ENCODE measurements at regions of chr10 and their contacts with region 1.

Region 1: DNA sequence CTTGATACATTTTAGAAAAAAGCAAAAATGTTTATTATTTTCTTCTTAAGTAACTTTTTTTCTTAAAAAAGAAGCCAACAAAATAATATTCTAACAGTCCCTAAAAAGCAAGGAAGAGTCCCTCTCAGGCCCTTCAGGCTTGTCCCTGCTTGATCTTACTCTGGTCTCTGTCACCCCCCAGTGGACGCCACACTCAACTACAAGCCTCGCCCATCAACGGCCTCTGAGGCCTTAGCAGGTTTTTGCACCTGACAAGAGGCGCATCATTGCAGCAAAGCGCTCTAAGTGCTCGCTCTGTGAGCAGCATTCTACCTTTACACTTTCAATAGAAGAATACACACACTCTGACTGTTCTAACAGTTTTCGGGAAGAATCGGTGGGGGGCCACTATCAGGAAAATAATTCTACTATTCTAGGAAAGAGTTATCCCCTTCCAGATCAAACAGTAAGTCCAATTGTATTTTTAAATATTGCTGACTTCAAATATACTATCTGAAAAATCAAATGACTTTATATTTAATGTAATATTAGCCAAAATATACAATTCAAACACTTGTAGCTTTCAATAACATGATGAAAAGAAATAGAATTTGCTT is 139.2 kb downstream of the USP6NL start:
- DNase-seq: peak; percentile 85
- H3K4me3 Mint-ChIP-seq: no peak overlapping the region
- H3K27ac Mint-ChIP-seq: no peak overlapping the region
- H3K4me1 Mint-ChIP-seq: no peaks in the 10 kb centered on the region
- H3K27me3 Mint-ChIP-seq: no peaks in the 10 kb centered on the region

Region 2: GRCh38 chr10:11036407-11037011 is 435.7 kb before region 1 on chr10:
- CTCF ChIA-PET with region 1: no interaction called
- intact Hi-C with region 1: loop called (anchors 5 kb)
- DNase-seq: no peak
- H3K4me3 Mint-ChIP-seq: no peak overlapping the region
- H3K27ac Mint-ChIP-seq: no peak overlapping the region
- H3K4me1 Mint-ChIP-seq: peaks cover 4% of the 10 kb centered on the region
- H3K27me3 Mint-ChIP-seq: peaks cover 9% of the 10 kb centered on the region

Region 3: DNA sequence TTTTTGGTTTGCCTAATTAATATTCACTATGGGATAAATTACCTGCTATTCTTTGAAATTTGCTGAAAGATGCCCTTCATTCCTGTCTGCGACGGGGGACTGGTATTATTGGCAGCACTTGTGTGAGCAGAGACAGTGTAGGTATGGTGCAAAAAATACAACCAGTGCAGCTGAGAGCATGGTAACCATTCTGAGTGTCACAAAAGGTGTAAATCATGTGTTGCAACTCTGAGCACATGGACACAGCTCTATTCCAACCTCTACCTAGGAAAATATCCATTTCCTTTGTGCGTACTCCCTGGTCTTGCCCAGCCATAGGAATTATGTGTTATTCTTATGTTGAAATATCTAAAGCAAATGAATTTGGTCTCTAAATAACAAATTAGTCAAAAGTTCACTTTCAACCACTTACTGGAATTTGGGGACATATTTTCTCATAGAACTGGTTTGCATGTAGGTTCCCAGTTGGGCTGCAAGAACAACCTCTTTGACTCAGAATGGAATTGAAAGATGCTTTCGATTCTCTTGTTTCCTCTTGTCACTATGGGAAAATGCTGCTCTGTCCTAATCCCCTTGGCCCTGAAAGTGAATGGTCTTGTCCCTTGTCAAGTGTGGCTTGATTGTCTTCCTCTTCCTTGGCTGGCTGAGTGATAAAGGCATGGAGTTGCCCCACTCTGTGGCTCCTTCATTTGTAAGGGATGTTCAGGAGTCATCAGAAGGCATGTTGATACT is 397.6 kb before region 1 on chr10:
- CTCF ChIA-PET with region 1: no interaction called
- intact Hi-C with region 1: no loop called
- DNase-seq: no peak
- H3K4me3 Mint-ChIP-seq: no peak overlapping the region
- H3K27ac Mint-ChIP-seq: no peak overlapping the region
- H3K4me1 Mint-ChIP-seq: no peaks in the 10 kb centered on the region
- H3K27me3 Mint-ChIP-seq: no peaks in the 10 kb centered on the region

Region 4: GRCh38 chr10:11270135-11270857 is 202.0 kb before region 1 on chr10:
- CTCF ChIA-PET with region 1: interaction called, 3 read pairs
- intact Hi-C with region 1: loop called (anchors 5 kb)
- DNase-seq: peak; percentile 85
- H3K4me3 Mint-ChIP-seq: no peak overlapping the region
- H3K27ac Mint-ChIP-seq: peak overlapping the region; percentile 52
- H3K4me1 Mint-ChIP-seq: peaks cover 77% of the 10 kb centered on the region
- H3K27me3 Mint-ChIP-seq: no peaks in the 10 kb centered on the region

Region 5: DNA sequence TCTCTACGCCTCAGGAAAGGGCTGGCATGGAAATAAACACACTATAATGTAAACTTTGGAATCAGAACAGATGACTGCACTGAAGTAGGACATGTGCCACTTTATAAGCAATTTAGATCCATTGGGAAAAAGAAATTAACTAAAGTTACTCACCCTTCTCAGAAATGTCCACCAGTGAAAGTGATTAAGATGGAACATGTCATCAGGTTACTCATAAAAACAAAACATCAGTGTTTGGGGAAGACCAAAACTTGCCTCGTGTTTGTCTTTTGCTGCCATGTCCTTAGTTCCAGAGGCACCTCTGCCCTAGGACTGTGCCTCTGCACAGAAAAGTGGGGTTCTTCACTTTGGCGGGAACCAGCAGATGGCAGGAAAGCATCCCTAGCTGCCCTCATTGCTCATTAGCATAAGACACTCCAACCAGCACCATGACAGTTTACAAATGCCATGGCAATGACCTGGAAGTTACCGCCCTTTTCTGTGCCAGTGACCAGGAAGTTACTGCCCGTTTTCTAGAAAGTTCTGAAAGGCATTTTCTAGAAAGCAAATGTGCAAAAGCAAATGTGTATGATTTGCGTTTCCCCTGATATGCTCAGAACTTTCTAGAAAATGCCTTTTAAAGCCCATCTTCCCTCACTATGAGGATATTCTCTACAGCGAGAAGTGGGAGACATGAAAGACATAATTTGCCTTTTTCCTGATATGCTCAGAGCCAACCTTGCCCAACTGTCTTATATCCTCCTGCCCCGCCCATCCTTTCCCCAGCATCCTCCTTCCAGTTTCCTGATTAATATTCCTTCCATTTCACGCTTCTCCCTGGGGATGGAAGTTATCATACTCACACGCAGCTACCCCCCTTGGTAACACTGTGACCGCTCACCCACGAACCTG is 119.0 kb before region 1 on chr10:
- CTCF ChIA-PET with region 1: no interaction called
- intact Hi-C with region 1: loop called (anchors 2 kb)
- DNase-seq: peak; percentile 19
- H3K4me3 Mint-ChIP-seq: no peak overlapping the region
- H3K27ac Mint-ChIP-seq: no peak overlapping the region
- H3K4me1 Mint-ChIP-seq: peaks cover 3% of the 10 kb centered on the region
- H3K27me3 Mint-ChIP-seq: no peaks in the 10 kb centered on the region

Region 6: DNA sequence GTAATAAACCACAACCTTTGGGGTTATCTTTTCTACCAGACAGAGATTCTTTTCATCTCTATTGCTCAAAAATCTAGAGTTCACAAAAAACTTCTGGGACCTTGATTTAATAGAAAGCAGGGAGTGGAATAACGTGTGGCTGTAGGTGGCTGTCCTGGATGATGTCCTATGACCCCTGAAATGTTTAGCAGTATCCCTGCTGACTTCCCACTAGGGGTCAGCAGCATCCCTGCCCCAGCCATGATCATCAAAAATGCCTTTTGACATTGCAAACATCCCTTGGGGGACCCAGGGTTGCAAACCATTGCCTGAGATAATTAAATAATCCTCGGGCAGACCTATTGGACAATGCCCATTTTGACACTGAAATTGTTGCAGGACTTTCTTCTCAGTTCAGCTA is 37.9 kb before region 1 on chr10:
- CTCF ChIA-PET with region 1: no interaction called
- intact Hi-C with region 1: loop called (anchors 1 kb)
- DNase-seq: no peak
- H3K4me3 Mint-ChIP-seq: no peak overlapping the region
- H3K27ac Mint-ChIP-seq: no peak overlapping the region
- H3K4me1 Mint-ChIP-seq: peaks cover 3% of the 10 kb centered on the region
- H3K27me3 Mint-ChIP-seq: peaks cover 3% of the 10 kb centered on the region

Measured in activated naive CD4-positive, alpha-beta T cell treated with anti-CD3 and anti-CD28 coated beads for 36 hours (primary cell).